Activated T-helper 1 cell treated with anti-CD3 and anti-CD28 coated beads, Interleukin-12 subunit alpha, Interleukin-12 subunit beta, Interleukin-2, Interleukin-4 antibody, amounts not matched to agents 30 ng/mL and 10 ng/mL and 1 ng/mL, durations not matched to agents 14 hours and 24 hours and 36 hours (primary cell): ENCODE measurements at regions of chr3 and their contacts with region 1.

Region 1: DNA sequence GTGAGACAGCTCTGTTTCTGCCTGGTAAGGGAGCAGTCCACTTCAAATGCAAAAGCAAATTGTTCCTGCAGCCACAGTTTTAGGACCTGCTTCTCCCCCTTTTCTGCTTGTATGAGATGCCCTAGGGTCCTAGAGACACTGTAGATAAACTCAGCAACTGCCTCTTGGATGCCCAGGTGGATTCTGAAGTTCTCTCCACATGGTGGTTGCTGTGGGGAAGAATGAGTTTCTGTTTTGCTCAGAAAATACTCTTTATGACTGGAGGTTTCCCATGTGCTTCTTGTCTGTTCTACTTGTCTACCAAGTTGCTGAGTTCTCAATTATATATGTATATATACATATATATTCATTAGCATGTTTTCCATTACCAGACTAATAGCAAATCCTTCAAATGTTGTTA is 5.6 kb upstream of the ZNF80 start:
- DNase-seq: peak; percentile 24
- H3K4me3 Mint-ChIP-seq: no peak overlapping the region
- H3K27ac Mint-ChIP-seq: peak overlapping the region; percentile 45
- H3K4me1 Mint-ChIP-seq: peaks cover 23% of the 10 kb centered on the region
- H3K27me3 Mint-ChIP-seq: peaks cover 4% of the 10 kb centered on the region

Region 2: GRCh38 chr3:114194750-114195149 is 48.2 kb before region 1 on chr3:
- intact Hi-C with region 1: no loop called
- DNase-seq: no peak
- H3K4me3 Mint-ChIP-seq: no peak overlapping the region
- H3K27ac Mint-ChIP-seq: no peak overlapping the region
- H3K4me1 Mint-ChIP-seq: no peaks in the 10 kb centered on the region
- H3K27me3 Mint-ChIP-seq: no peaks in the 10 kb centered on the region

Region 3: DNA sequence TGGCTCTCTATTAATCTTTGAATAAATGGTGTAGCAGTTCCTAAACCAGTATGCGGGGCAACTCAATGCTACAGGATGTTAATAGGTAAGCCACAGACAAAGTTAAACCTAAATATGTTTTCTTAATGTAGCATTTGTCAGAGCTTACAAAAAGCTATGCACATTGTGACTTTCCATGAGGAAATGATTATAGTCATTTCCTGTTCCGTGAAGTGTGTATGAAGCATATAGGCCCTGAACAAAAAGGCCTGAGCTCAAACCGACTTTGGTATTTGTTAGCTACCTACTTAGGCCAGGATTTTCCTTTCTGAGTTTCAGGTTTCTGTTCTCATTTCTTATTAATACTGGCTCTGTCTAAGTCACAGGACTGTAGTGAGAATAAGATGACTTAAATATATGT is 19.8 kb before region 1 on chr3:
- intact Hi-C with region 1: loop called (anchors 1 kb)
- DNase-seq: no peak
- H3K4me3 Mint-ChIP-seq: peak overlapping the region; percentile 29
- H3K27ac Mint-ChIP-seq: peak overlapping the region; percentile 95
- H3K4me1 Mint-ChIP-seq: peaks cover 66% of the 10 kb centered on the region
- H3K27me3 Mint-ChIP-seq: peaks cover 1% of the 10 kb centered on the region

Region 4: DNA sequence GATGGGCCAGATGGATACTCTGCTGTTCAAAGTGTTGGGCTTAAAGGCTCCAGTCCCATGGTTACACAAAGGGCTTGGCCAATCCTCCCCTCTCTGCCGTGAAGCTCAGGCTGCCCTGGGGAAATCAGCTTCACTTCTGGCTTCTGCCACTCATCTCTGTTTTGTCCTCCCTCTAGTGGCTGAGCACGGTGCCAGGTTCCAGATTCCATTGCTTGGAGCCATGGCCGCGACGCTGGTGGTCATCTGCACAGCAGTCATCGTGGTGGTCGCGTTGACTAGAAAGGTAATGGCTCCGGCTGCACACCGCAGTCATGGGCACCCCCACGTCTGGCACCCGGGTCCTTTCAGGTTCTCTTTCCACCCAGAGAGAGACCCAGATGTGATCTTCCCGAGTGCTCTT is 56.5 kb after region 1 on chr3:
- intact Hi-C with region 1: no loop called
- DNase-seq: no peak
- H3K4me3 Mint-ChIP-seq: no peak overlapping the region
- H3K27ac Mint-ChIP-seq: no peak overlapping the region
- H3K4me1 Mint-ChIP-seq: peaks cover 7% of the 10 kb centered on the region
- H3K27me3 Mint-ChIP-seq: no peaks in the 10 kb centered on the region

Region 5: DNA sequence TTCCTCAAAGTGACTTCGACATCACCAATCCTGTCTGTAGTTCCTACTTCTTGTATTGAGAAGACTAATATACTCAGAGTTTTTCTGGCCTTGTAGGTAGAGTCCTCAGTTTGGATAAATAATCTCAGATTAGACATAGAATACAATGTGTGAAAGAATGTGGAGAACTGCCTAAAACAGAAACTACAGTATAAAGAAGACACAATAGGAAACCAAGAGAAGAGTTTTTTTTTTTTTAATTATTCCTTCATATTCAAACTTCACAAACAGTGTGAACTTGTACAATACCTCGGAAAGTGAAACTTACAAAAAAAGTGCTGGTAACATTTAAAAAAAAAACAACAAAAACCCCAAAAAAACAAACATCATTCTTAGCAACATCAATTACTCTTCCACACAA is 71.3 kb after region 1 on chr3:
- intact Hi-C with region 1: loop called (anchors 2 kb)
- DNase-seq: no peak
- H3K4me3 Mint-ChIP-seq: no peak overlapping the region
- H3K27ac Mint-ChIP-seq: peak overlapping the region; percentile 51
- H3K4me1 Mint-ChIP-seq: peaks cover 54% of the 10 kb centered on the region
- H3K27me3 Mint-ChIP-seq: no peaks in the 10 kb centered on the region

Region 6: DNA sequence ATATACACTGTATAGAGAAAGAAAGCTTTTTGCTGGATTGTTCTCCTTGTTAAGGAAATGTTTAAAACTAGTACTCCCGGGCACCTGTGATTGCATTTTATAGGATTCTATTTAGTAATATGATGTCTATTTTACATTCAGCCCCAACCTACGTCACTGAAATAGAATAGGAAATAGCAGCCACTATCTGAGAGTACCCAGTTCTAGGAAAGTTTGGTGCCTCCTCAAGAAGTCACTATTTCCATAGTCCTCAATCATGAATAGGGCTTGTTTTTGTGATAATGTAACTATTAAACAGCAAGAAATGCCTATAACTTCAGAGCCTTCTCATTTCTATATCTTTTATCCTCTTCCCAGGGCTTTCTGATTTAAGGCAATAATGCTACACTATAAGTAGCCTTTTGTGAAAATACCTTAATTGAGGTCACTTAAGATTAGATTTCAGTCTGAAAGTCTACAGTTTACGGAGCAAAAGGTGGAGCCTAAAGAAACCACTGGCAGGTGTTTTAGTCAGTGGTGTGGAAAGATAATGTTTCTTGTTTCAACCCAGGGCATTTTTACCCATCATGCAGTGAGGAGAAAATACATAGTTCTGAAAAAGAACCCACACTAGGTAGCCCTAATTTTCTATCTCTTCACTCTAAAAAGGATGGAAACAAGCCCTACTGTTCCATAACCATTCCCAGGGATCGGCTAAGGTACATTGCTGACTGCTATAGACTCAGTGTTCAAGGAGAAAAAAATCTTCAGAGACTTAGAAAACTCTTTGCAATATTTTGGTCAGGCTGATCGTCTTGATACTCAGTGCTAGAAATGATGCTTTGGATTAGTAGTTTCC is 89.6 kb after region 1 on chr3:
- intact Hi-C with region 1: loop called (anchors 2 kb)
- DNase-seq: no peak
- H3K4me3 Mint-ChIP-seq: peak overlapping the region; percentile 20
- H3K27ac Mint-ChIP-seq: peak overlapping the region; percentile 86
- H3K4me1 Mint-ChIP-seq: peaks cover 51% of the 10 kb centered on the region
- H3K27me3 Mint-ChIP-seq: peaks cover 3% of the 10 kb centered on the region